ENCODE measurements at regions of chr10 and their contacts with region 1.

Region 1: DNA sequence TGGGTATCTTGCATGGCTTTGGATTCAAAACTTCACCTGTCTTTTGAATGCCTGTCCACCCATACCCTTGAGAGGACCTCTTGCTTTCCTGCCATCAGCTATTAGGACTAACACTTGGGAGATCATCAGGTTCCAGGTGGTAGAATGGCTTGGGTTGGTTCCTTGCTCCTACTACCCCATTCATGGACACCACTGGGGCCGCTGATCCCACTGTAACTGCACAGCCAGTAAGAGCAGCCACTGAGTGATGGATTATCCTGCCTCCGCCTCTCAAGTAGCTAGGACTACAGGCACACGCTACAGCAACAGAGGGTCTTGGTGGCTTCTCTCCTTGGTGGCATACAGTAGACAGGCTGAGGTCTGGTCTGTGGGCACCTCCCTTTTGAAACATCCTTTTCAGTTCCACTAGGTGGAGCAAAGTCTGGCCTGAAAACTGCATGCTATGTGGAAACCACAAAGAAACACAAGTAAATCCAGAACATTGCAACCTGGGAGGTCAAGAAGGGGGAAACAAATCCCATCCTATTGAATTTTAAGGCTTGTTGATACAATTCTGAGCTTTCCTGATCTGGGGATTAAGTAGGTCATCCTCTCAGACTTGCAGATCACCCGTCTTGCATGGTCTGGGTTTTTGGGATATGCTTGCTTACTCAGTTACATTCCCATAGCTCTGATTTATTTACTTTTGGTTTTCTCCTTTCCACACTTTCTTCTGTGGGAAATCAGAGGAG is 9.4 kb downstream of the WBP1L start:
- DNase-seq: peak; percentile 67
- H3K4me3 ChIP-seq: no peak overlapping the region; the same call in 1 of the 2 replicates
- CTCF ChIP-seq: peak; percentile 58

Region 2: DNA sequence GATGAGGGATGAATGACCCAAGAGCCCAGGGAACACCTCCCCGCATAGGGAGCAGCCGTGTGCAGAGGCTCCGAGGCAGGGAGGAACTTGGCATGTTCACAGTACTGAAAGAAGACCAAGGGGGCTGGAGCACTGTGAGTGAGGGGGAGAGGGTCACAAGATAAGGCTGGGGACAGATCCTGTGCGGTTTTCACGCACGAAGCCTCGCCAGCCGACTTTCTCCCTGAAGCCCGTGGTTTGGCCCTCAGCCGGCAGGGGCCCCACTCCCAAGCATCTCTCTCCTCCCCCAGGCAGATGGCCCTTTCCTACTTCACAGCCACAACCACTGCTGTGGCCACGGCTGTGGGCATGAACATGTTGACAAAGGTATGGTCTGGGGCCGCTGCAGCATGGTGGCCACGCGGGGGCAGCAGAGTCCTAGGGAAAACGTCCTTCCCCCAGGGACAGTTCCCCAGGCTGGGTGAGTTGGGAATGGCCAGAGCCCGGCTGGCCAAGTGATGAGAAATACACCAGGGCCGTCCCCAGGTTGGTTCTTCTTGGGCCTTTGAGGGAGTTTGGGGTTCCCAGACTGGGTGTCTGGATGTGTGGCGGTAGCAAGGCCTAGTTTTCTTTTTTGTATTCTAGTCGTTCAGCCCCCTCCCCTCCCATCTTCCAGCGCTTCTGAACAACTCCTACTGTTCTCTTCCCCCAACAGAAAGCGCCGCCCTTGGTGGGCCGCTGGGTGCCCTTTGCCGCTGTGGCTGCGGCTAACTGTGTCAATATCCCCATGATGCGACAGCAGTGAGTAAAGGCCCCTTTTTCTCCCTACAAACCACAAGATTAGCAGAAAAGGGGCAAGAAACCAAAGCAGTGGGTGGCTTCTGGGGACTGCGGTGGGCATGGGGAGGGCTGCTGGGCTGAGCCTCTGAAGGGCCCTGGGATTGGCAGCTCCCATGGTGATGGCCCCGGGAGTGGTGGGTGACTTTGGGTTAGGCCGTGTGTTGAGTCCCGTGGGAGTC is 23.8 kb before region 1 on chr10:
- CTCF ChIA-PET with region 1: interaction called, 12 read pairs
- POLR2A ChIA-PET with region 1: no interaction called
- DNase-seq: no peak
- H3K4me3 ChIP-seq: no peak overlapping the region
- CTCF ChIP-seq: peak; percentile 95

Region 3: GRCh38 chr10:102764389-102765178 is 11.5 kb after region 1 on chr10:
- CTCF ChIA-PET with region 1: interaction called, 50 read pairs
- POLR2A ChIA-PET with region 1: interaction called, 8 read pairs
- DNase-seq: no peak
- H3K4me3 ChIP-seq: no peak overlapping the region
- CTCF ChIP-seq: no peak

Region 4: GRCh38 chr10:102776779-102777456 is 23.8 kb after region 1 on chr10:
- CTCF ChIA-PET with region 1: interaction called, 28 read pairs
- POLR2A ChIA-PET with region 1: interaction called, 29 read pairs
- DNase-seq: peak; percentile 93
- H3K4me3 ChIP-seq: peak overlapping the region; percentile 51
- CTCF ChIP-seq: no peak